ENCODE measurements at regions of chr12 and their contacts with region 1.

Region 1: DNA sequence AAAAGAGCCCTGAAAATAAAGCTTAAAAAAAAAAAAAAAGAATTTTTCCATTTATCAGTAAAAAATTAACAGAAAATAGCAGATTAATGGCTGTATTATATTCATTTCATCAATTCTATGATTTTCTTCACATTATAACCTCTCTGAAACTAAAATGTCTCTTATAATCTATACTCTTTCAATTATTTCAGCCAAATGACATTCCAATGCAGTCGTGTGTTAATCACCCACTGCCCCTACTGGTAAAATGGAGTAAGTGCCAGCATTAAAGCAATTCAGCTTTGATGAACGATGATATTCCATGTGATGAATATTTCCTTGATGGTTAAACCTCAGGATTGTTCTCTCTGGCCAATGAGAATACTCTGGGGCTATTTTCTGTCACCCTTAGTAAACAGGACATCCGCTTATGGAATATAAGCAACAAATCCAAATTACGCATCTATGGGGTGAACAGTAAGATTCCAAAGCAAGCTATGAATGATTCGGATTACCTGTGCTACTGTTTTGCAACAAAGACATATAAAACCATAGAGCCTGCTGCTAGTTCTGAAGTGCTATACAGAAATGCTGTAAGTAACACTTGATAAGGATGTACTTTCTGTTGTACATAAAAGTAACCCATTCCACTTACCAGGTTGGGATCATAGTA is 20.3 kb upstream of the SYCP3 start:
- DNase-seq: peak; percentile 19
- H3K4me3 ChIP-seq: no peak overlapping the region
- H3K27ac ChIP-seq: no peak overlapping the region
- H3K4me1 ChIP-seq: no peaks in the 10 kb centered on the region
- H3K27me3 ChIP-seq: no peaks in the 10 kb centered on the region
- CTCF ChIP-seq: peak; percentile 82 to 91

Region 2: GRCh38 chr12:101379149-101379548 is 380.4 kb before region 1 on chr12:
- CTCF ChIA-PET with region 1: interaction called, 25 read pairs
- dilution Hi-C with region 1: no loop called
- in situ Hi-C with region 1: no loop called
- intact Hi-C with region 1: no loop called
- DNase-seq: no peak
- H3K4me3 ChIP-seq: no peak overlapping the region
- H3K27ac ChIP-seq: no peak overlapping the region
- H3K4me1 ChIP-seq: no peaks in the 10 kb centered on the region
- H3K27me3 ChIP-seq: no peaks in the 10 kb centered on the region
- CTCF ChIP-seq: no peak

Region 3: DNA sequence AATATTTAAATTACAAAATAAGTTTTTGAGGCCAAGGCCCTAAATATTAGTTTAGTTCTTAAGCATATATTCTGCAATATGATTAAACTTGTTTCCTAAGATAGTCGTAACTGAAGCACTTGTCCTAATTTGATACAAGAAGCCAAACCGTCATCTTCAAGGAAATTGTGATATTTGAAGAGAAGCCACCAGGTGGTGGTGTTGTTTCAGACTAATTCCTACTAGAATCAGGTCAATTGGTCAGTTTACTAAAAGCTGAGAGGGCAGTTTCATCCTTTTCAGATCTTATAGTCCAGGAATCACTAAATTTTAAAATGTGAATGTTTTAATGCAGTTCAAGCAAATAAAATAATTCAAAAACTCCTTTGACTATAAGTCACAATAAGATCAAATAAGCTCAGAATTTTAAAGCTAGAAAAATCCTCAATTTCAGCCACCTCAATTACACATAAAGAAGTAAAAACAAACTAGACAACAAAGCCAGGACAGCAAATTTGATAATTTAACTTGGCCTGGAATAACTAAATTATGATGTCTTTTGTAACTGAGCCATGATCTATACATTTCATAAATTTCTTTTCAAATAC is 344.9 kb before region 1 on chr12:
- CTCF ChIA-PET with region 1: no interaction called
- dilution Hi-C with region 1: no loop called
- in situ Hi-C with region 1: loop called (anchors 10 to 25 kb)
- intact Hi-C with region 1: loop called (anchors 1 kb)
- DNase-seq: peak; percentile 42
- H3K4me3 ChIP-seq: no peak overlapping the region
- H3K27ac ChIP-seq: no peak overlapping the region
- H3K4me1 ChIP-seq: peaks cover 3% of the 10 kb centered on the region
- H3K27me3 ChIP-seq: no peaks in the 10 kb centered on the region
- CTCF ChIP-seq: peak; percentile 25 to 56

Region 4: GRCh38 chr12:101490286-101490920 is 269.1 kb before region 1 on chr12:
- CTCF ChIA-PET with region 1: no interaction called
- dilution Hi-C with region 1: no loop called
- in situ Hi-C with region 1: no loop called
- intact Hi-C with region 1: loop called (anchors 10 kb)
- DNase-seq: peak; percentile 3
- H3K4me3 ChIP-seq: no peak overlapping the region
- H3K27ac ChIP-seq: no peak overlapping the region
- H3K4me1 ChIP-seq: no peaks in the 10 kb centered on the region
- H3K27me3 ChIP-seq: no peaks in the 10 kb centered on the region
- CTCF ChIP-seq: peak; percentile 43 to 52

Region 5: DNA sequence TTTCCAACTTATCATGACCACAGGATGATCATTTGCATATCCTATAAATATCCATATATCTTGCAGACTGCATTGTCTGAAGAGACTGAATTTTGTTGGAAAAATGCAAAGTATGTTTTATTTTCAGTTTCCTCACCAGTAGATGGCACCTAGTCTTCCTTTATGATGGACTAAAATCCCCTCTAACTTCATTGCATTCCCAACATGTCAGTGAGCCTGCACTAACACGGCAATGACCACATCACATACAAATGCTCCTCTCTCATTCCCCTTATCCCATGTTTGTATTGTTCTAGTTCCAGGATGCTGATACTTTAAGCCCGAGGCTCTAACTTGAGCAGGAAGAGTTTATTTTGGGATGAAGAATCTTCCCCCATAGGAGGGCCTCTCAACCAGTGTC is 189.5 kb before region 1 on chr12:
- CTCF ChIA-PET with region 1: no interaction called
- dilution Hi-C with region 1: no loop called
- in situ Hi-C with region 1: no loop called
- intact Hi-C with region 1: loop called (anchors 1 kb)
- DNase-seq: peak; percentile 24
- H3K4me3 ChIP-seq: no peak overlapping the region
- H3K27ac ChIP-seq: no peak overlapping the region
- H3K4me1 ChIP-seq: no peaks in the 10 kb centered on the region
- H3K27me3 ChIP-seq: no peaks in the 10 kb centered on the region
- CTCF ChIP-seq: peak; percentile 8 to 35

Region 6: GRCh38 chr12:101670007-101670687 is 89.4 kb before region 1 on chr12:
- CTCF ChIA-PET with region 1: no interaction called
- dilution Hi-C with region 1: no loop called
- in situ Hi-C with region 1: no loop called
- intact Hi-C with region 1: loop called (anchors 1 kb)
- DNase-seq: peak; percentile 5
- H3K4me3 ChIP-seq: no peak overlapping the region
- H3K27ac ChIP-seq: no peak overlapping the region
- H3K4me1 ChIP-seq: no peaks in the 10 kb centered on the region
- H3K27me3 ChIP-seq: no peaks in the 10 kb centered on the region
- CTCF ChIP-seq: peak; percentile 42 to 49

Region 7: GRCh38 chr12:101713059-101713682 is 46.4 kb before region 1 on chr12:
- CTCF ChIA-PET with region 1: no interaction called
- dilution Hi-C with region 1: no loop called
- in situ Hi-C with region 1: no loop called
- intact Hi-C with region 1: no loop called
- DNase-seq: no peak
- H3K4me3 ChIP-seq: no peak overlapping the region
- H3K27ac ChIP-seq: no peak overlapping the region
- H3K4me1 ChIP-seq: no peaks in the 10 kb centered on the region
- H3K27me3 ChIP-seq: no peaks in the 10 kb centered on the region
- CTCF ChIP-seq: no peak

Region 8: GRCh38 chr12:101850199-101850598 is 90.7 kb after region 1 on chr12:
- CTCF ChIA-PET with region 1: no interaction called
- dilution Hi-C with region 1: no loop called
- in situ Hi-C with region 1: no loop called
- intact Hi-C with region 1: no loop called
- DNase-seq: no peak
- H3K4me3 ChIP-seq: no peak overlapping the region
- H3K27ac ChIP-seq: no peak overlapping the region
- H3K4me1 ChIP-seq: peaks cover 7% of the 10 kb centered on the region
- H3K27me3 ChIP-seq: no peaks in the 10 kb centered on the region
- CTCF ChIP-seq: no peak

Measured in mammary epithelial cell (primary cell).